CD4-positive, alpha-beta T cell (primary cell): ENCODE measurements at regions of chr21 and their contacts with region 1.

Region 1: DNA sequence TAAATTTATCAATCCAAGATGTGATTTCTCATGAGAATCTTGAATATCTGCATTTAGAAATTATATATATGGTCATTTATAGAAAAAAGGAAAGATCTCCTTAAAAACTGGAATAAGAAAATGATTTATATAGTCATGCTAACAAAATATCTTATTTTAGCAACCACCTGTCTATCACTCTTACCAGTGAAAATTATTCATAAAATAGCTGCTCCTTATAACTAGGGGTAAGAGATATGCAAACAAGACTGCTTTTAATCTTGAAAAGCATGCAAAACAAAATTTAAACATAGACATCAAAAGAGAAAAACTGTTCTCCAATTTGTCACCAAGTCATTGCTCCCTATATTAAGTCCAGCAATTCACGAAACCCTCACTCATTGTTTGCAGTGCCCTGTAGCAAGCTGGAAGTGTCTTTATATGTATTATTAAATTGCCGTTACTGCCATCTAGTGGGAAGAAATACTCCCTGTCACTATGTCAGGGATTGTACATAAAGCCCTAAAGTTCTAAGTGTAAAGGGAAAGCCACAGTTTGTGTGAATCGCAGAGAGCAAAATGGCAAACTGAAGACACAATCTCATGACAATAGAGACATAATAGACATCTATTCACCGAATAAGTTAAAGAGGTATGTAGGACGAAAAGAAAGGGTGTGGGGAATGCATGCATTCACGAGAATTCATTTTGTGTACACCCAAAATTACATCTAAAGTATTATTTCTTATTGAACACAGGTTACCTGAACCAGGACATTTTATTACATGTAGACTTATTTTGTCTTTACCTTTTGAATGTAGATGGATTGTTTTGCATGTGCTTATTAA is 600.5 kb downstream of the USP25 start:
- DNase-seq: peak in 3 of 14 experiments; percentile 39 to 52 (median 51)
- ATAC-seq: peak; percentile 76
- H3K4me3 ChIP-seq: no peak overlapping the region
- H3K4me3 Mint-ChIP-seq: no peak overlapping the region
- H3K27ac ChIP-seq: no peak overlapping the region
- H3K27ac Mint-ChIP-seq: no peak overlapping the region
- H3K4me1 ChIP-seq: no peaks in the 10 kb centered on the region
- H3K4me1 Mint-ChIP-seq: no peaks in the 10 kb centered on the region
- H3K27me3 ChIP-seq: no peaks in the 10 kb centered on the region
- H3K27me3 Mint-ChIP-seq: no peaks in the 10 kb centered on the region
- CTCF ChIP-seq: peak; percentile 73

Region 2: DNA sequence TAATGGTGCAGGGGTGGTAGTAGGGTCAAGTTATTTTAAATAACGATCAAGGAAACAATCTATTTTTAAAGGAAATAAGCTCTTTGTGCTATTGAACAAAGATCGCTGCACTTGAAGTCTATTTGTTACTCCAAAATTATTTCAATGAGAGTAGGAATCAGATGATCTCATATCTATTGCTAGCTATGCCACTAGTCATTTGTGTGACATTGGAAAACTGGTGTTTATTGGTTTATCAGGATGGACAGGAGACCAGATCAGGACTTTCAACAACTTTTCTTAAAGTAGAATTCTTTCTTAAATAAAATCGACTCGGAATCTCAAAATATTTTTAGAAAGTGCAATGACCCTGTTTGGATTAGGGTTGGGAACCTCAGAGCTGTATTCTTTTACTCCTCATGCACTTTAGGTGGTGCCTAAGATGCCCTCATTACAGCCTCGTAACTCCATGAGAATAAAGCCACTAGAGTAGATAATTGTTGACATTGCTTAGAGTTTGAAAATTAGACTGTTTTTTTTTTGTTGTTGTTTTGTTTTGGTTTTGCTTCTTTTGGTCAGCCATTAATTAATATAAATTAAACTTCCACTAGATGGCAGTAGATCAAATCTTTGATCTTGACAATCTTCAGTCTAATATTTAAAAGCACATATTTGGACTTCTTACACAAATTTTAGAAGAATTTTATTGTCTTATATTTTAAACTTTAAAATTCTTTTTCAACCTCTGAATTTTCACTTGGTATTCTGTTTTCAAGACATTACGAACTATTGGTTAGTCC is 248.1 kb before region 1 on chr21:
- CTCF ChIA-PET with region 1: no interaction called
- POLR2A ChIA-PET with region 1: no interaction called
- intact Hi-C with region 1: loop called in 1 of 2 experiments (anchors 5 kb)
- DNase-seq: peak in 1 of 14 experiments; percentile 8
- ATAC-seq: no peak
- H3K4me3 ChIP-seq: no peak overlapping the region
- H3K4me3 Mint-ChIP-seq: no peak overlapping the region
- H3K27ac ChIP-seq: no peak overlapping the region
- H3K27ac Mint-ChIP-seq: no peak overlapping the region
- H3K4me1 ChIP-seq: no peaks in the 10 kb centered on the region
- H3K4me1 Mint-ChIP-seq: no peaks in the 10 kb centered on the region
- H3K27me3 ChIP-seq: no peaks in the 10 kb centered on the region
- H3K27me3 Mint-ChIP-seq: no peaks in the 10 kb centered on the region
- CTCF ChIP-seq: peak; percentile 38

Region 3: DNA sequence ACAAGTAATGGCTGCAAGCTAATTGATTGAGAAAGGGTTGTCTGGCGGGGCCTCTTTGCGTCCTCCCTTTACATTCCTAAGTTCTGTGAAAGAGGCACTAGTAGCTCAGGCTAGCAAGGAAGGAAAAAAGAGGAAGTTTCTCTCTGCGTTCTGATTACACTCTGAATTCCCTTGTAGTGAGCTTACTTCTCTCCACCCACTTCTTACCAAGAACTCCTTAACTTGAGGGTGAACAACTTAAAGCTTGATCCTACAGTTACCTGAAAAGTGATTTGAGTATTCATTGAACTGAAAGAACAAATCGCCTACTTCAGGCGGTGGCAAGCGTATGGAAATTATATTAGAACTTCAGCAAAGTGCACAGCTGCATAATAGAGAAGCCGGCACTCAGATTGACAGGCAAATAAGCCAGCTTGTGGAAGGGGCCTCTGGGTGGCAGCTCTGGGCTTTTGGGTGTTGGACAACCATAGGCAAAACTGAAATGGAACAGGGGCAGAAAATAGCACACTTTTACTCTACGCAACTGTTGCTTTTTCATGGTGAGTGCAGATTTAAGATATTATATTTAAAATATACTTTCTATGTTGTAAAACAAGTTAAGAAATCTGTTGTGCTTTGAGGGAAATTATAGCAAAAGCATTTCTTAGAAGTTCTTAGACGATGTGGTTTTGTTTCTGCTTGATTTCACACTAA is 136.1 kb before region 1 on chr21:
- CTCF ChIA-PET with region 1: no interaction called
- POLR2A ChIA-PET with region 1: no interaction called
- intact Hi-C with region 1: loop called in 1 of 2 experiments (anchors 2 kb)
- DNase-seq: peak in 4 of 14 experiments; percentile 4 to 32 (median 22)
- ATAC-seq: peak; percentile 67
- H3K4me3 ChIP-seq: no peak overlapping the region
- H3K4me3 Mint-ChIP-seq: peak overlapping the region; percentile 86
- H3K27ac ChIP-seq: no peak overlapping the region
- H3K27ac Mint-ChIP-seq: peak overlapping the region; percentile 81
- H3K4me1 ChIP-seq: no peaks in the 10 kb centered on the region
- H3K4me1 Mint-ChIP-seq: peaks cover 28% of the 10 kb centered on the region
- H3K27me3 ChIP-seq: no peaks in the 10 kb centered on the region
- H3K27me3 Mint-ChIP-seq: no peaks in the 10 kb centered on the region
- CTCF ChIP-seq: no peak